ENCODE measurements at regions of chr7 and their contacts with region 1.

Region 1: GRCh38 chr7:138008547-138009349 is 6.9 kb upstream of the CREB3L2 start:
- DNase-seq: peak; percentile 68
- ATAC-seq: peak; percentile 87
- H3K4me3 ChIP-seq: no peak overlapping the region
- H3K27ac ChIP-seq: no peak overlapping the region; the same call in 1 of the 2 replicates
- H3K4me1 ChIP-seq: peaks cover 5% of the 10 kb centered on the region; the same call in 1 of the 2 replicates
- H3K27me3 ChIP-seq: peaks cover 5% of the 10 kb centered on the region; the same call in 1 of the 2 replicates
- CTCF ChIP-seq: peak; percentile 94
- POLR2A ChIP-seq: no peak
- RAD21 ChIP-seq: peak; percentile 90

Region 2: DNA sequence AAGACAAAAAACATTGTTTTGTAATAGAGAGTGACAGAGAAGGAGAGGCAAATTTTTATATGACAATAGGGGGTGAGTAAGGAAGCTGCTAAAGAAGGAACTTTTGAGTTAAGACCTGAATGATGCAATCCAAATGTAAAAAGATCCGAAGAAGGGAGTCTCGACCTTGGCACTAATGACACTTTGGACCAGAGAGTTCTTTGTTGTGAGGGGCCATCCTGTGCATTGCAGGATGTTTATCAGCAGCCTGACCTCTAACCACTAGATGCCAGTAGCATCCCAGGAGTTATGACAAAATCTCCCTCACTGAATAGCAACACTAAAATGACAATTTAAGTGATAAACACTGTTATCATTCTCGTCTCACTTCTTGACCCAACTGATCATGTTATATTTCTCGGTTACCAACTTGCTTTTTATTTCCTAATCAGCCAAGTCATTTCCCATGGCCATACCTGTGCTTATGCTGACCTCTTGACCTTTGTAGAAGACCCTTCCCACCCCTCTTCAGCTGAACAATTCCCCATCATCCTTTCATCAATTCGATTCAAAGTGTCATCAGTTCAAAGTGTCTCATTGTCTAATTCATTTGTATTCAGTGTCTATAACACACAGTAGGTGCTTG is 191.9 kb before region 1 on chr7:
- CTCF ChIA-PET with region 1: no interaction called
- POLR2A ChIA-PET with region 1: no interaction called
- dilution Hi-C with region 1: no loop called
- in situ Hi-C with region 1: no loop called
- intact Hi-C with region 1: loop called (anchors 1 kb)
- DNase-seq: no peak
- ATAC-seq: no peak
- H3K4me3 ChIP-seq: no peak overlapping the region
- H3K27ac ChIP-seq: no peak overlapping the region
- H3K4me1 ChIP-seq: peaks cover 11% of the 10 kb centered on the region
- H3K27me3 ChIP-seq: no peaks in the 10 kb centered on the region
- CTCF ChIP-seq: peak; percentile 37
- POLR2A ChIP-seq: no peak
- RAD21 ChIP-seq: peak; percentile 45

Region 3: GRCh38 chr7:138066954-138067394 is 58.2 kb after region 1 on chr7:
- CTCF ChIA-PET with region 1: no interaction called
- POLR2A ChIA-PET with region 1: no interaction called
- dilution Hi-C with region 1: no loop called
- in situ Hi-C with region 1: no loop called
- intact Hi-C with region 1: no loop called
- DNase-seq: no peak
- ATAC-seq: no peak
- H3K4me3 ChIP-seq: no peak overlapping the region
- H3K27ac ChIP-seq: no peak overlapping the region
- H3K4me1 ChIP-seq: no peaks in the 10 kb centered on the region
- H3K27me3 ChIP-seq: no peaks in the 10 kb centered on the region; the same call in 1 of the 2 replicates
- CTCF ChIP-seq: no peak
- POLR2A ChIP-seq: no peak
- RAD21 ChIP-seq: no peak

Measured in IMR-90 (cell line).